Activated naive CD4-positive, alpha-beta T cell treated with anti-CD3 and anti-CD28 coated beads, Interleukin-2, amount 10 ng/mL, durations not matched to agents 7 days and 5 days (primary cell): ENCODE measurements at regions of chr14 and their contacts with region 1.

Region 1: DNA sequence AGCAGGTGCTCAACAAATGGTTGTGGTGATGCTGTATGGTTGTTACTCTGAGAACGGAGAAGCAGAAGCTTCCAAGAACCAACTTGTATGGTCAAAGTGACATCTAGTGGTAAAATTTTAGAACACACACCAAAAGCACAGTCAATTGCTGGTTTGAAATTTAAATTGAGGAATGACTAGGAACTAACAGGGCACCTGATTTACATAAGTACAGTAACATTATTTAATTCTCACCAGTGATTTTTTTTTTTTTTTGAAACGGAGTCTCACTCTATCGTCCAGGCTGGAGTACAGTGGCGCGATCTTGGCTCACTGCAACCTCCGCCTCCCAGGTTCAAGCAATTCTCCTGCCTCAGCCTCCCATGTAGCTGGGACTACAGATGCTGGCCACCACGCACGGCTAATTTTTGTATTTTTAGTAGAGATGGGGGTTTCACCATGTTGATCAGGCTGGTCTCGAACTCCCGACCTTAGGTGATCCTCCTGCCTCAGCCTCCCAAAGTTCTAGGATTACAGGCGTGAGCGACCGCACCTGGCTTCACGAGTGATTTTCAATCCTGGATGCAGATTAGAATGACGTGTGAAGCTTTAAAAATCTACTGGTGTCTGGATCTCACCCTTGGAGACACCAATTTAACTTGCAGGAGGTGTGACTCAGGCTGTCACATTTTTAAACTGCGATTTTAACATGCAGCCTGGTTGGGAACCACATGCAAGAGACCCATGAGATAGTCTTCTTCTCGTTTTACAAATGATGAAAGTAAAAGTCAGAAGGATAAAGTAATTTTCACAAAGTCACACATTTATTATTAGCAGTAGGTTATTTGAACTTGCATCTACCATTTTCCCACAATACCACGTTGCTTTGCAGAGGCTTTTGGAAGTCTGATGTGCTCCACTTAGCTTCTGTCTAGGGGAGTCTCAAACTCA is 14.1 kb upstream of the NUMB start:
- DNase-seq: no peak
- H3K4me3 Mint-ChIP-seq: no peak overlapping the region
- H3K27ac Mint-ChIP-seq: no peak overlapping the region
- H3K4me1 Mint-ChIP-seq: peaks cover under 1% of the 10 kb centered on the region
- H3K27me3 Mint-ChIP-seq: peaks cover 7% of the 10 kb centered on the region

Region 2: GRCh38 chr14:73173092-73173735 is 299.2 kb before region 1 on chr14:
- CTCF ChIA-PET with region 1: interaction called, 46 read pairs
- DNase-seq: peak; percentile 26
- H3K4me3 Mint-ChIP-seq: no peak overlapping the region
- H3K27ac Mint-ChIP-seq: no peak overlapping the region
- H3K4me1 Mint-ChIP-seq: no peaks in the 10 kb centered on the region
- H3K27me3 Mint-ChIP-seq: no peaks in the 10 kb centered on the region

Region 3: DNA sequence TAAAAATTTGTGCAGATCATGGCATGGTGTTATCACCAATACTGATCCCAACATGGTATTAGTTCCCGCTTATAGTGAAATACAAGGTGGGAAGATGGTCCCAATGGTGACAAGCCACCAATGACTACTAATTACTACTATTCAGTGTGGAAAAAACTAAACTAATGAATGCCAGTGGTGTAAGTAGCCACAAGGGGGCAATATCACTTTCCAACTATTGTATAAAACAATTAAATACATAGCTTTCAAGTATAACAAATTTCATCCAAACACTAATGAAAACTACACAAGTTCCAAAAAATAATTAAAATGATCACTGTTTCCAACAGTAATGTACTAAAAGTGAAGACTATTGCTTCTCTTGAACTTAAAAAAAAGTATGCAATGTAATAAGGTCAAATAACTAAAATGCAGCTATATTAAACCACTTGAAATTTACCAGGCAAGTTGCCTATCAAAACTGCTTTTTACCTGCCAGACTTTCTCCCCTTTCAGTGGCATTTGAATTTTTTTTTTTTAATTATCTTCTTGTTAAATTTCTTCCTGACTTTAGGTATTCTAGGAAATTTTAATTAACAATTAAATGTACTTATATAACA is 177.2 kb before region 1 on chr14:
- CTCF ChIA-PET with region 1: interaction called, 87 read pairs
- DNase-seq: no peak
- H3K4me3 Mint-ChIP-seq: no peak overlapping the region
- H3K27ac Mint-ChIP-seq: no peak overlapping the region
- H3K4me1 Mint-ChIP-seq: peaks cover 4% of the 10 kb centered on the region
- H3K27me3 Mint-ChIP-seq: no peaks in the 10 kb centered on the region